Activated CD8-positive, alpha-beta T cell treated with anti-CD3 and anti-CD28 coated beads for 36 hours (primary cell): ENCODE measurements at regions of chr2 and their contacts with region 1.

Region 1: DNA sequence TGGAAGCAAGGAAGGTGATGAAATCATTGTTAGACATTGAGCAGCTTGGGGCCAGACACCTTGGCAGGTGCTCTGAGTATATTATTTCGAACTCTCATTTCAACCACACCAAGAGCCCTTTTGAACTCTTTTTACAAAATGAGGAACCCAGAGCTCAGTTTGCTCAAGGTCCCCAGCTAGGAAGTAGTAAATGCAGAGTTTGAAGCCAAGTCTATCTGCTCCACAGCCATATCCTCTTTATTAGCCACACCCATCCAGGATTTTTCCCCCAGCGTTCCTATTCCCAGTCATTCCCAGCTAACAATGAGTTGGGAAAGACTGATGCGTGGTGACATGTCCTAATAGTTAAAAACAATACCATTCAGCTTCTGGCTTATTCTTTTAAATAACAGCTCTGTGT is 40.2 kb downstream of the SEMA4F start:
- DNase-seq: no peak
- ATAC-seq: no peak
- H3K4me3 Mint-ChIP-seq: no peak overlapping the region
- H3K27ac Mint-ChIP-seq: no peak overlapping the region
- H3K4me1 Mint-ChIP-seq: no peaks in the 10 kb centered on the region
- H3K27me3 Mint-ChIP-seq: no peaks in the 10 kb centered on the region
- CTCF ChIP-seq: no peak

Region 2: DNA sequence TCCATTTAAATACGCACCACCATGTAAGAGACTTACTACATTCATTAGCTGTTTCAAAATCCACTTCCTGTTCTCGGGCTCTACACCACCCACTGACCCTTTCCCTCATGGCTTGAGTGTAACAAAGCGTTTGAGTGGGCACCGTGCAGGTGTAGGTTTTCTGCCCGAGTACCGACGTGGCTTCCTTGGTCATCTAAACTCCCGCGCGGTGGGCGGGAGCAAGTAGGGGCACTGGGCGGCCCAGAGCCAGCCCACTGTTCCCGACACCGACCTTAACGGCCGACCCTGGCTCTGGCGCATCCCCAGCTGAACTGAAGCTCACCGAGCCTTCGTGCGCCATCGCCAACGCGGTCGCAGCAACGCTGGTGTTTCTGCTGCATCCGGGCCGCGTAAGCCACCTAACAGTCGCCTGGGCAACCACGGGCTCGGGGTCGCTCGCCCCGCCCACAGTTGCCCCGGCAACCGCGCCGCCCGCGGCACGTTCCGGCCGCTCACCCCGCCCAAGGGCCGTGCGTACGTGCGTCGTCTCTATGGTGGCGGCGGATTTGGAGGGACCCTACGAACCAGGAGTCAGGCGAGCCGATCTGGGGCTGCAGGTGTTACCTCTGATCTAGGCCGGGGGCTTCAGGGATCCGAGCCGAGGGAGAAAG is 272.9 kb before region 1 on chr2 and contains the starts of genes C2orf81 and WDR54:
- CTCF ChIA-PET with region 1: no interaction called
- POLR2A ChIA-PET with region 1: no interaction called
- intact Hi-C with region 1: no loop called
- DNase-seq: peak; percentile 97
- ATAC-seq: peak; percentile 94
- H3K4me3 Mint-ChIP-seq: peak within 1 kb of the TSS; percentile 97
- H3K27ac Mint-ChIP-seq: peak within 1 kb of the TSS; percentile 97
- H3K4me1 Mint-ChIP-seq: peaks cover 18% of the 10 kb centered on the region
- H3K27me3 Mint-ChIP-seq: no peaks in the 10 kb centered on the region
- CTCF ChIP-seq: no peak
- total RNA-seq, gene C2orf81: 2.6 to 3.9 TPM
- total RNA-seq, gene WDR54: 129 to 132 TPM

Region 3: GRCh38 chr2:74671479-74671878 is 22.8 kb before region 1 on chr2:
- CTCF ChIA-PET with region 1: no interaction called
- POLR2A ChIA-PET with region 1: no interaction called
- intact Hi-C with region 1: no loop called
- DNase-seq: no peak
- ATAC-seq: no peak
- H3K4me3 Mint-ChIP-seq: no peak overlapping the region
- H3K27ac Mint-ChIP-seq: no peak overlapping the region
- H3K4me1 Mint-ChIP-seq: no peaks in the 10 kb centered on the region
- H3K27me3 Mint-ChIP-seq: no peaks in the 10 kb centered on the region
- CTCF ChIP-seq: no peak

Region 4: DNA sequence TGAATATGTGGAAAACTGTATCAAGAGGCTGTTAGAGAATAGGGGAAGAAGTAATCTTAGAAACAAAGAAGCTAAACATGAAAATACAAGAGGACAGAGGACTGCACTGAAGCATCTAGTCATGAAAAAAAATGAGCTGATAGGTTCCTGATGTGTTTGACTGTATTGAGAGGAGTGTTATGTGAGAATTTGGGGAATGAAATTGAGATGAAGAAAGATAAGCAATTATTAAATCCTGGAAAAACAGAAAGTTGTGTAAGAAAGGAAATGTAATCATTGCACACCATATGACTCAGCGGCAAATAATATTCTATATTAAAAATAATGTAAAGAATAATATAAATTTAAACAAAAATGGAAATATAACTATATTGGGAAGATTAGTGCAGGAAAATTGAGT is 31.0 kb after region 1 on chr2:
- CTCF ChIA-PET with region 1: no interaction called
- POLR2A ChIA-PET with region 1: no interaction called
- intact Hi-C with region 1: no loop called
- DNase-seq: no peak
- ATAC-seq: no peak
- H3K4me3 Mint-ChIP-seq: no peak overlapping the region
- H3K27ac Mint-ChIP-seq: no peak overlapping the region
- H3K4me1 Mint-ChIP-seq: no peaks in the 10 kb centered on the region
- H3K27me3 Mint-ChIP-seq: peaks cover 7% of the 10 kb centered on the region
- CTCF ChIP-seq: no peak

Region 5: GRCh38 chr2:74864846-74865722 is 170.8 kb after region 1 on chr2:
- CTCF ChIA-PET with region 1: no interaction called
- POLR2A ChIA-PET with region 1: no interaction called
- intact Hi-C with region 1: no loop called
- DNase-seq: no peak
- ATAC-seq: no peak
- H3K4me3 Mint-ChIP-seq: no peak overlapping the region
- H3K27ac Mint-ChIP-seq: no peak overlapping the region
- H3K4me1 Mint-ChIP-seq: peaks cover 19% of the 10 kb centered on the region
- H3K27me3 Mint-ChIP-seq: no peaks in the 10 kb centered on the region
- CTCF ChIP-seq: no peak

Region 6: GRCh38 chr2:74876081-74876886 is 182.0 kb after region 1 on chr2:
- CTCF ChIA-PET with region 1: interaction called, 12 read pairs
- POLR2A ChIA-PET with region 1: no interaction called
- intact Hi-C with region 1: no loop called
- DNase-seq: peak; percentile 54
- ATAC-seq: peak; percentile 67
- H3K4me3 Mint-ChIP-seq: no peak overlapping the region
- H3K27ac Mint-ChIP-seq: no peak overlapping the region
- H3K4me1 Mint-ChIP-seq: no peaks in the 10 kb centered on the region
- H3K27me3 Mint-ChIP-seq: no peaks in the 10 kb centered on the region
- CTCF ChIP-seq: peak; percentile 63